CD4-positive, alpha-beta T cell (primary cell): ENCODE measurements at regions of chr15 and their contacts with region 1.

Region 1: GRCh38 chr15:80989518-80990478 is at the start of gene MESD:
- DNase-seq: peak; percentile 93 to 99 (median 98)
- ATAC-seq: peak; percentile 99
- H3K4me3 ChIP-seq: peak within 1 kb of the TSS; percentile 92
- H3K4me3 Mint-ChIP-seq: peak within 1 kb of the TSS; percentile 95
- H3K27ac ChIP-seq: peak within 1 kb of the TSS; percentile 79 to 83
- H3K27ac Mint-ChIP-seq: peak within 1 kb of the TSS; percentile 94
- H3K4me1 ChIP-seq: peaks cover 42% of the 10 kb centered on the region
- H3K4me1 Mint-ChIP-seq: peaks cover 68% of the 10 kb centered on the region
- H3K27me3 ChIP-seq: no peaks in the 10 kb centered on the region
- H3K27me3 Mint-ChIP-seq: no peaks in the 10 kb centered on the region
- CTCF ChIP-seq: no peak
- total RNA-seq, gene MESD: 8.4 to 10.2 TPM

Region 2: GRCh38 chr15:80072285-80072994 is 917.4 kb before region 1 on chr15:
- CTCF ChIA-PET with region 1: no interaction called
- POLR2A ChIA-PET with region 1: no interaction called
- intact Hi-C with region 1: loop called in 1 of 2 experiments (anchors 5 kb)
- DNase-seq: peak in 5 of 14 experiments; percentile 10 to 80 (median 69)
- ATAC-seq: peak; percentile 99
- H3K4me3 ChIP-seq: peak overlapping the region; percentile 31
- H3K4me3 Mint-ChIP-seq: peak overlapping the region; percentile 81
- H3K27ac ChIP-seq: no peak overlapping the region
- H3K27ac Mint-ChIP-seq: peak overlapping the region; percentile 55
- H3K4me1 ChIP-seq: no peaks in the 10 kb centered on the region
- H3K4me1 Mint-ChIP-seq: peaks cover 86% of the 10 kb centered on the region
- H3K27me3 ChIP-seq: no peaks in the 10 kb centered on the region
- H3K27me3 Mint-ChIP-seq: no peaks in the 10 kb centered on the region
- CTCF ChIP-seq: no peak

Region 3: GRCh38 chr15:80695104-80695910 is 294.5 kb before region 1 on chr15 and contains the start of gene ABHD17C:
- CTCF ChIA-PET with region 1: no interaction called
- POLR2A ChIA-PET with region 1: no interaction called
- intact Hi-C with region 1: loop called in 1 of 2 experiments (anchors 10 kb)
- DNase-seq: peak in 11 of 14 experiments; percentile 5 to 71 (median 38)
- ATAC-seq: peak; percentile 69
- H3K4me3 ChIP-seq: peak within 1 kb of the TSS; percentile 62
- H3K4me3 Mint-ChIP-seq: peak within 1 kb of the TSS; percentile 96
- H3K27ac ChIP-seq: no peak within 1 kb of the TSS
- H3K27ac Mint-ChIP-seq: peak within 1 kb of the TSS; percentile 53
- H3K4me1 ChIP-seq: peaks cover 20% of the 10 kb centered on the region
- H3K4me1 Mint-ChIP-seq: peaks cover 24% of the 10 kb centered on the region
- H3K27me3 ChIP-seq: no peaks in the 10 kb centered on the region
- H3K27me3 Mint-ChIP-seq: peaks cover 7% of the 10 kb centered on the region
- CTCF ChIP-seq: no peak
- total RNA-seq, gene ABHD17C: 0.33 to 0.59 TPM

Region 4: DNA sequence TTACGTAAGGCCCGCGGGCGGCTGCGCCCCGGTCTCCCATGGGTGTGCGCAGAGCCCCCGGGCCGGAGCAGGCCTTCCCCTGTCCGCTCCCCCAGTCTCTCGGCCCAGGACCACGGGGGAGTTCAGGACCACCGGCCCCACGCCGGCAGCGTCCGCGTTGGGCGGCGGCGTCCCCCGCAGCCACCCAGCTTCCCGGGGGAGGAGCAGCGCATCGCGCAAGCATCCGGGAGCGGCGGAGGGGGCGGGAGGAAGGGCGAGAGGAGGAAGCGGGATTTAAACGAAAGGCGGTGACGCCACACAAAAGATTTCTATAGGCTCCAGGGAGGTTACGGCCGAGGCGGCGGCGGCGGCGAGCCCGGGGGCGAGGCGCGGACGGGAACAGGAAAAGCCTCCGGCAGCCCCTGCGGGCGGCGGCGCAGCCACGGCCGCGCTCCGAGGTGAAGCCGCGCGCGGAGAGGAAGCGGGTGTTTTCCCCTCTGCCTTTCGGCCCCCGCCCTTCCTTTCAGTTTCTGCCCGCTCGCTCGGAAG is 10.9 kb after region 1 on chr15 and contains the start of gene TLNRD1:
- CTCF ChIA-PET with region 1: interaction called, 15 read pairs
- POLR2A ChIA-PET with region 1: interaction called, 70 read pairs
- intact Hi-C with region 1: loop called (anchors 1 to 2 kb)
- DNase-seq: peak; percentile 63 to 94 (median 76)
- ATAC-seq: peak; percentile 67
- H3K4me3 ChIP-seq: peak within 1 kb of the TSS; percentile 97
- H3K4me3 Mint-ChIP-seq: peak within 1 kb of the TSS; percentile 95
- H3K27ac ChIP-seq: peak within 1 kb of the TSS; percentile 94 to 96
- H3K27ac Mint-ChIP-seq: peak within 1 kb of the TSS; percentile 92
- H3K4me1 ChIP-seq: peaks cover 41% of the 10 kb centered on the region
- H3K4me1 Mint-ChIP-seq: peaks cover 62% of the 10 kb centered on the region
- H3K27me3 ChIP-seq: no peaks in the 10 kb centered on the region
- H3K27me3 Mint-ChIP-seq: no peaks in the 10 kb centered on the region
- CTCF ChIP-seq: no peak
- total RNA-seq, gene TLNRD1: 10.5 to 12.3 TPM

Region 5: DNA sequence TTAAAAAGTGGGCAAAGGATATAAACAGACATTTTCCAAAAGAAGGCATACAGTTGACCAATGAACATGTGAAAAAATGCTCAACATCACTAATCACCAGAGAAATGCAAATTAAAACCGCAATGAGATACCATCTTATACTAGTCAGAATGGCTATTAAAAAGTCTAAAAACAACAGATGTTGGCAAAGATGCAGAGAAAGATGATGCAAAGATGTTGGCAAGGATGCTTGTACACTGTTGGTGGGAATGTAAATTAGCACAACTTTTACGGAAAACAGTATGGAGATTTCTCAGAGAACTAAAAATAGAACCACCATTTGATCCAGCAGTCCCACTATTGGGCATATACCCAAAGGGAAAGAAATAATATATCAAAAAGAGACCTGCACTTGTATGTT is 64.4 kb after region 1 on chr15:
- CTCF ChIA-PET with region 1: no interaction called
- POLR2A ChIA-PET with region 1: no interaction called
- intact Hi-C with region 1: no loop called
- DNase-seq: no peak
- ATAC-seq: no peak
- H3K4me3 ChIP-seq: no peak overlapping the region
- H3K4me3 Mint-ChIP-seq: no peak overlapping the region
- H3K27ac ChIP-seq: no peak overlapping the region
- H3K27ac Mint-ChIP-seq: no peak overlapping the region
- H3K4me1 ChIP-seq: no peaks in the 10 kb centered on the region
- H3K4me1 Mint-ChIP-seq: no peaks in the 10 kb centered on the region
- H3K27me3 ChIP-seq: no peaks in the 10 kb centered on the region
- H3K27me3 Mint-ChIP-seq: no peaks in the 10 kb centered on the region
- CTCF ChIP-seq: no peak

Region 6: GRCh38 chr15:81323944-81324881 is 334.4 kb after region 1 on chr15 and contains the start of gene STARD5:
- CTCF ChIA-PET with region 1: no interaction called
- POLR2A ChIA-PET with region 1: no interaction called
- intact Hi-C with region 1: loop called in 1 of 2 experiments (anchors 5 kb)
- DNase-seq: peak; percentile 87 to 98 (median 95)
- ATAC-seq: peak; percentile 96
- H3K4me3 ChIP-seq: peak within 1 kb of the TSS; percentile 65
- H3K4me3 Mint-ChIP-seq: peak within 1 kb of the TSS; percentile 93
- H3K27ac ChIP-seq: peak within 1 kb of the TSS in 1 of 2 donors; percentile 52
- H3K27ac Mint-ChIP-seq: peak within 1 kb of the TSS; percentile 83
- H3K4me1 ChIP-seq: peaks cover 26% of the 10 kb centered on the region
- H3K4me1 Mint-ChIP-seq: peaks cover 52% of the 10 kb centered on the region
- H3K27me3 ChIP-seq: no peaks in the 10 kb centered on the region
- H3K27me3 Mint-ChIP-seq: no peaks in the 10 kb centered on the region
- CTCF ChIP-seq: no peak
- total RNA-seq, gene STARD5: 9.7 to 9.8 TPM

Region 7: DNA sequence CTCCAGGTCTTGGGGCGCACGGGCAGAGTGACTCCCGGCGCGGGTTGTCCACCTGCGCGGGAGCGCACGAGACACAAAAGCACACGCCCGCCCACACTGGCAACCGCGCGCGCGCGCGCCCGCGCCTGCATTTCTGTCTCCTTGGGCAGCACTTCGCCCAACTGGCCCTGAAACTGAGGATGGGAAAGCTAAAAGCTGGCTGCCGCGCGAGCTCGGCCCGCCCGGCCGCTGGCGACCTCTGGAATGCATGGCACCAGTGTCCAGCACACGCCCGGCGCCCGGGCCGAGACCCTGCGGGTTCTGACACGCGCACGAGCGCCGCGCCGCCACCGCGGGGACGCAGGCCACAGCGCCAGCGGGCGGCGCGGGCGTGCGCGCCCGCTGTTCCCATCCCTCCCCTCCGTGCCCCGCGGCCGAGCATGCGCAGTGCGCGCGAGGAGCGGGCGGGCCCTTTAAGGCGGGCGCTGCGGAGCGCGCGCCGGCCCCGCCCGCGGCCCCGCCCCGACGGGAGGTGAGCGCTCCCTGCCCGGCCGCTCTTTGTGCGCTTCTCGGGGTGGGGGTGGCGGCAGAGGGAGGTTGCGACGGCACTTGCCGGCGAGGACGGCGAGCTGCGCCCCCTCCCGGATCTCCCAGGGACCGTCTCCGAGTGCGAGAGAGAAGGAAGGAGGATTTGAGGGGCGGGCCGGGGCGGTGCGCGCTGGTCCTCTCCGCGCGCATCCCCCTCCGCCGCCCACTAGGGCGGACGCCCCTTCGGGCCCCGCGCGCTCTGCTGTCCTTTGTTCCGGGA is 1057.1 kb after region 1 on chr15:
- CTCF ChIA-PET with region 1: no interaction called
- POLR2A ChIA-PET with region 1: no interaction called
- intact Hi-C with region 1: loop called in 1 of 2 experiments (anchors 5 kb)
- DNase-seq: peak; percentile 70 to 96 (median 86)
- ATAC-seq: peak; percentile 78
- H3K4me3 ChIP-seq: peak overlapping the region; percentile 84
- H3K4me3 Mint-ChIP-seq: peak overlapping the region; percentile 95
- H3K27ac ChIP-seq: peak overlapping the region; percentile 67 to 73
- H3K27ac Mint-ChIP-seq: peak overlapping the region; percentile 90
- H3K4me1 ChIP-seq: peaks cover 28% of the 10 kb centered on the region
- H3K4me1 Mint-ChIP-seq: peaks cover 12% of the 10 kb centered on the region
- H3K27me3 ChIP-seq: peaks cover 2 to 4% of the 10 kb centered on the region in 2 experiments
- H3K27me3 Mint-ChIP-seq: peaks cover 9% of the 10 kb centered on the region
- CTCF ChIP-seq: peak; percentile 62